ENCODE measurements at regions of chr18 and their contacts with region 1.

Region 1: DNA sequence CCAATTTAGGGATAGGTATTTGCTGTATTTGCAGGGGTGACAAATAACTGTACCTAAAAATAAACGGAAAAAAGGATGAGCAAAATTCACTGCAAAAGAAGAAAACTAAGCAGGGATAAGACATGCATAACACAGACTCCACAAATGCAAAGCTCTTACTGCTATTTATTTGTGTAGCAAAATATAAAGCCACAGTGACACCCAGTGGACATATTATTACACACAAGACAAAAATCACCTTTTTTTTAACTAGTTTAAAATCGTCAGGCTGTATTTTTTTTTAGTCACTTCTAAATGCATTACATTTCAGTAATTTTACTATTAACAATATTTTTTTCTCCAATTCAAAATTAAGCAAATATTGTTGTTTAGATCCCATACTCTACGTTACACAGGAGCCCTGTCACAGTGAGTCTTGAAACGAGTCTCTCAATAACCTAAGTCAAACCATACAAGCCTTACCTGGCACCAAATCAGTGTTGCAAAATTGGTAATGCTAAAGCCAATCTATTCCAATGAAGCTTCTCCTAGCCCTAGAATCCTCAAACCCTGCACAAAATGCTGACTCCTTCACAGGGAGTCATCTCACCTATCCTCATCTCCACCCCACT is 23.7 kb downstream of the METTL4 start:
- DNase-seq: peak in 3 of 14 experiments; percentile 50 to 67 (median 66)
- ATAC-seq: peak; percentile 62
- H3K4me3 ChIP-seq: no peak overlapping the region
- H3K4me3 Mint-ChIP-seq: no peak overlapping the region
- H3K27ac ChIP-seq: no peak overlapping the region
- H3K27ac Mint-ChIP-seq: no peak overlapping the region
- H3K4me1 ChIP-seq: no peaks in the 10 kb centered on the region
- H3K4me1 Mint-ChIP-seq: peaks cover 18% of the 10 kb centered on the region
- H3K27me3 ChIP-seq: no peaks in the 10 kb centered on the region
- H3K27me3 Mint-ChIP-seq: no peaks in the 10 kb centered on the region
- CTCF ChIP-seq: peak; percentile 88

Region 2: GRCh38 chr18:741931-742512 is 1805.6 kb before region 1 on chr18:
- CTCF ChIA-PET with region 1: no interaction called
- POLR2A ChIA-PET with region 1: no interaction called
- intact Hi-C with region 1: loop called in 1 of 2 experiments (anchors 10 kb)
- DNase-seq: peak in 3 of 14 experiments; percentile 59 to 71 (median 71)
- ATAC-seq: peak; percentile 87
- H3K4me3 ChIP-seq: no peak overlapping the region
- H3K4me3 Mint-ChIP-seq: no peak overlapping the region
- H3K27ac ChIP-seq: no peak overlapping the region
- H3K27ac Mint-ChIP-seq: no peak overlapping the region
- H3K4me1 ChIP-seq: no peaks in the 10 kb centered on the region
- H3K4me1 Mint-ChIP-seq: peaks cover 5% of the 10 kb centered on the region
- H3K27me3 ChIP-seq: no peaks in the 10 kb centered on the region
- H3K27me3 Mint-ChIP-seq: no peaks in the 10 kb centered on the region
- CTCF ChIP-seq: peak; percentile 91

Region 3: GRCh38 chr18:864872-865273 is 1682.7 kb before region 1 on chr18:
- CTCF ChIA-PET with region 1: interaction called, 3 read pairs
- POLR2A ChIA-PET with region 1: no interaction called
- intact Hi-C with region 1: loop called (anchors 1 to 2 kb)
- DNase-seq: peak; percentile 32 to 81 (median 45)
- ATAC-seq: peak; percentile 77
- H3K4me3 ChIP-seq: no peak overlapping the region
- H3K4me3 Mint-ChIP-seq: no peak overlapping the region
- H3K27ac ChIP-seq: no peak overlapping the region
- H3K27ac Mint-ChIP-seq: no peak overlapping the region
- H3K4me1 ChIP-seq: peaks cover 4% of the 10 kb centered on the region
- H3K4me1 Mint-ChIP-seq: peaks cover 7% of the 10 kb centered on the region
- H3K27me3 ChIP-seq: peaks cover 3 to 10% of the 10 kb centered on the region in 2 experiments
- H3K27me3 Mint-ChIP-seq: peaks cover 55% of the 10 kb centered on the region
- CTCF ChIP-seq: peak; percentile 75

Region 4: GRCh38 chr18:1585879-1586488 is 961.6 kb before region 1 on chr18:
- CTCF ChIA-PET with region 1: no interaction called
- POLR2A ChIA-PET with region 1: no interaction called
- intact Hi-C with region 1: loop called (anchors 2 to 5 kb)
- DNase-seq: peak in 3 of 14 experiments; percentile 14 to 24 (median 22)
- ATAC-seq: no peak
- H3K4me3 ChIP-seq: no peak overlapping the region
- H3K4me3 Mint-ChIP-seq: no peak overlapping the region
- H3K27ac ChIP-seq: no peak overlapping the region
- H3K27ac Mint-ChIP-seq: no peak overlapping the region
- H3K4me1 ChIP-seq: no peaks in the 10 kb centered on the region
- H3K4me1 Mint-ChIP-seq: no peaks in the 10 kb centered on the region
- H3K27me3 ChIP-seq: no peaks in the 10 kb centered on the region
- H3K27me3 Mint-ChIP-seq: peaks cover 28% of the 10 kb centered on the region
- CTCF ChIP-seq: peak; percentile 62

Region 5: DNA sequence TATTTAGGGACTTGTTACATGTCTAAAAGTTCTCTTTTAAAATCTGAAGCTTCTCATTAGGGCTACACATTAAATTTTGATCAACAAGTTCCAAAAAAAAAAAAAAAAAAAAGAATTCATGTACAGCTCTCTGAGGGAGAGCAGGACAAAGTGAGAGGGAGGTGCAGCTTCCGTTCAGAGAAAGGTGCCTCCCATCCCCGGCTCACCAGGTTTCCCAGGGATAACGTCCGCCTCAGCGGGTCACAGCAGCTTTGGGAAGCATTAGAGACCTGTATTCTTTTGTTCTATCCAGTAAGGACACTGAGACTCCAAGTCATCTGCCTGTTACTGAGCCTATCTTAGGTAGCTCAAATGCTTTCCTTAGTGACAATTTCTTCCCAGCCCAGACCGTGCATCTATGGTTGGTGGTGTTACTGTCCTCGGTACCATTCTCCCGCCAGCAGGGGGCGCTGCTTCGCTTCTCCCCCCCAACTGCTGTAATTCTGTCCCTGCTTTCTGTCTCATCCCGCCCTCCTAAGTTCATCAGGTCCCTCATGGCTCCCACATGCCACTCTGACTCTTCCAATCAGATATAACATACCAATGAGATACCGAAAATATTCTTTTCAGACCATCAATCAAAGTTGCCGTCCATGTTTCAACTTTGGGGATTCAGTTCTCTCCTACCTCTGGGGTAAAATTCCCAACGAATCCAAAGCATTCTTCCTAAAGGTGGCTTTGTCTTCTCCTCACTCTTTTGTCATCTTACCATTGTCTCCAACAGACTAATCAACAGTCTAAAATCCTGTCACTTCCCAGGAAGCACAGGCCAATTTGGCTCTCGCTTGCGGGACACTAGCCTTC is 442.7 kb before region 1 on chr18:
- CTCF ChIA-PET with region 1: interaction called, 4 read pairs
- POLR2A ChIA-PET with region 1: no interaction called
- intact Hi-C with region 1: loop called in 1 of 2 experiments (anchors 5 kb)
- DNase-seq: peak in 11 of 14 experiments; percentile 7 to 55 (median 22)
- ATAC-seq: no peak
- H3K4me3 ChIP-seq: no peak overlapping the region
- H3K4me3 Mint-ChIP-seq: no peak overlapping the region
- H3K27ac ChIP-seq: no peak overlapping the region
- H3K27ac Mint-ChIP-seq: no peak overlapping the region
- H3K4me1 ChIP-seq: no peaks in the 10 kb centered on the region
- H3K4me1 Mint-ChIP-seq: no peaks in the 10 kb centered on the region
- H3K27me3 ChIP-seq: no peaks in the 10 kb centered on the region
- H3K27me3 Mint-ChIP-seq: peaks cover 13% of the 10 kb centered on the region
- CTCF ChIP-seq: peak; percentile 43

Region 6: GRCh38 chr18:2337552-2338141 is 209.9 kb before region 1 on chr18:
- CTCF ChIA-PET with region 1: interaction called, 10 read pairs
- POLR2A ChIA-PET with region 1: no interaction called
- intact Hi-C with region 1: loop called (anchors 1 to 2 kb)
- DNase-seq: peak in 12 of 14 experiments; percentile 14 to 63 (median 44)
- ATAC-seq: no peak
- H3K4me3 ChIP-seq: no peak overlapping the region
- H3K4me3 Mint-ChIP-seq: no peak overlapping the region
- H3K27ac ChIP-seq: no peak overlapping the region
- H3K27ac Mint-ChIP-seq: no peak overlapping the region
- H3K4me1 ChIP-seq: no peaks in the 10 kb centered on the region
- H3K4me1 Mint-ChIP-seq: no peaks in the 10 kb centered on the region
- H3K27me3 ChIP-seq: no peaks in the 10 kb centered on the region
- H3K27me3 Mint-ChIP-seq: peaks cover 39% of the 10 kb centered on the region
- CTCF ChIP-seq: peak; percentile 72

Region 7: DNA sequence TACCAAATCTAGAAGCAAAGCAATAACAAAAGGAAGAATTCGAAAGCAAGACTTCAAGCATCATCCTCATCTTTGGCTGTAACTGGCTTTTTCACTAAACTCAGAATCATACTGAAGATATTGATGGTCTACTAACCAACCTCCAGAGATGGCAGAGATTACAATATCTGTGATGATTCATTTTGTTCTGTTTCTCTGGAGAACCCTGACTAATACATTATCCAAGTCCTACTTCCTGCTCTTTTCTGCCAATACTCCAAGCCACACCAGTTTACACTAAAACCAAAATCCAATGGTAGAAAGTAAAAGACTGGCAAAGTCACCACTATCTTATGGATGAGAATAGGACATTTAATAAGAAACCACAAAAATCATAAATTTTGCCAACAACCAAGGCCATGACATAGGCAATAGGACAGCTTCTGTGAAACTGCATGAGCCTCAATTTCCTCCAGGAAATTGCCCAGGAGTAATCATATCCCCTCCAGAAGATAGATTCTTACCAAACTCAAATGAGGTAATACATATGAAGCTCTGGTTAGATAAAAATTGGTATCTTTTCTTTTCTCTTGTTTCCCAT is 136.1 kb before region 1 on chr18:
- CTCF ChIA-PET with region 1: no interaction called
- POLR2A ChIA-PET with region 1: no interaction called
- intact Hi-C with region 1: no loop called
- DNase-seq: no peak
- ATAC-seq: no peak
- H3K4me3 ChIP-seq: no peak overlapping the region
- H3K4me3 Mint-ChIP-seq: no peak overlapping the region
- H3K27ac ChIP-seq: no peak overlapping the region
- H3K27ac Mint-ChIP-seq: no peak overlapping the region
- H3K4me1 ChIP-seq: no peaks in the 10 kb centered on the region
- H3K4me1 Mint-ChIP-seq: no peaks in the 10 kb centered on the region
- H3K27me3 ChIP-seq: peaks cover 0 to 5% of the 10 kb centered on the region in 2 experiments
- H3K27me3 Mint-ChIP-seq: peaks cover 23% of the 10 kb centered on the region
- CTCF ChIP-seq: no peak

Region 8: DNA sequence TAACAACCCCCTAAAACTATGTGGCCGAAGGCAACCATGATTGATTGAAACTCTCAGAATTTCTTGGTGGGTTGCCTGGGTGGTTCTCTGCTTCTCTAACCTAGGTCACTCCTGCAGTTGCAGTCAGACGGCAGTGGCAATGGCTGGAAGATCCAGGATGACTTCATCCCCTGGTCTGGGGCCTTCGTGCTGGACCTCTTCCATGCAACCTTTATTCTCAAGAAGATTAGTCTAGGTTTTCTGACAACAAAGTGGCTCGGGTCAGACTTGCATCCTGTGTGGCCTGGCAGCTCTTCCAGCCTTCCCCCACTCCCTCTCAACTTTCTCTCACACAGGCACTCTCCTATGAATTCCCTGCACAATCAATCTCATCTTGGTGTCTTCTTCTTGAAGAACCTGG is 52.7 kb before region 1 on chr18:
- CTCF ChIA-PET with region 1: no interaction called
- POLR2A ChIA-PET with region 1: no interaction called
- intact Hi-C with region 1: no loop called
- DNase-seq: no peak
- ATAC-seq: no peak
- H3K4me3 ChIP-seq: no peak overlapping the region
- H3K4me3 Mint-ChIP-seq: no peak overlapping the region
- H3K27ac ChIP-seq: no peak overlapping the region
- H3K27ac Mint-ChIP-seq: no peak overlapping the region
- H3K4me1 ChIP-seq: no peaks in the 10 kb centered on the region
- H3K4me1 Mint-ChIP-seq: no peaks in the 10 kb centered on the region
- H3K27me3 ChIP-seq: no peaks in the 10 kb centered on the region
- H3K27me3 Mint-ChIP-seq: peaks cover 9% of the 10 kb centered on the region
- CTCF ChIP-seq: no peak

Region 9: GRCh38 chr18:3604498-3605408 is 1057.2 kb after region 1 on chr18:
- CTCF ChIA-PET with region 1: no interaction called
- POLR2A ChIA-PET with region 1: no interaction called
- intact Hi-C with region 1: no loop called
- DNase-seq: peak in 5 of 14 experiments; percentile 9 to 85 (median 72)
- ATAC-seq: peak; percentile 69
- H3K4me3 ChIP-seq: peak overlapping the region; percentile 47
- H3K4me3 Mint-ChIP-seq: no peak overlapping the region
- H3K27ac ChIP-seq: peak overlapping the region; percentile 38 to 58
- H3K27ac Mint-ChIP-seq: no peak overlapping the region
- H3K4me1 ChIP-seq: peaks cover 47% of the 10 kb centered on the region
- H3K4me1 Mint-ChIP-seq: peaks cover 8% of the 10 kb centered on the region
- H3K27me3 ChIP-seq: no peaks in the 10 kb centered on the region
- H3K27me3 Mint-ChIP-seq: no peaks in the 10 kb centered on the region
- CTCF ChIP-seq: no peak

Region 10: DNA sequence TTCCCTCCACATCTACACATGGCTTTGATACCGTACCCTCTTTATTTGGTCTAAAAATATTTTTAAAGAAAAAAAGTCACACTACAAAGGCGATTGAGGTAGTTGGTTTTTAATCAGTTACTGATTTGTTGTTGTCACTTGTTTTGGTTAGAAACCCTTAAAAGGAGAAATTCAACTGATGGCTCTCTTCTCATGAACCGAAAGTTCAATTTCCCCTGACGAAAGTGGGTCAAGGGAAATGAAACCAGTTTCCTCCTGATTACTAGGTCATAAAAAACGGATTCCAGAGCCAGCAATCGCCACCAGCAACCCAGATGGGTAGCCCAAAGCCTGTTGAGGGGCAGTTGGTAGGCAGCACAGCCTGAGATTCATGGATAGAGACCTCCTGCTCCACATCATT is 1844.3 kb after region 1 on chr18:
- CTCF ChIA-PET with region 1: no interaction called
- POLR2A ChIA-PET with region 1: no interaction called
- intact Hi-C with region 1: no loop called
- DNase-seq: peak in 2 of 14 experiments; percentile 6 to 18
- ATAC-seq: no peak
- H3K4me3 ChIP-seq: no peak overlapping the region
- H3K4me3 Mint-ChIP-seq: no peak overlapping the region
- H3K27ac ChIP-seq: no peak overlapping the region
- H3K27ac Mint-ChIP-seq: no peak overlapping the region
- H3K4me1 ChIP-seq: no peaks in the 10 kb centered on the region
- H3K4me1 Mint-ChIP-seq: no peaks in the 10 kb centered on the region
- H3K27me3 ChIP-seq: no peaks in the 10 kb centered on the region
- H3K27me3 Mint-ChIP-seq: no peaks in the 10 kb centered on the region
- CTCF ChIP-seq: no peak